Testis (tissue), 5 donors: ENCODE measurements at regions of chr13 and their contacts with region 1.

Region 1: GRCh38 chr13:21137696-21138095 is 38.7 kb downstream of the SKA3 start:
- DNase-seq: no peak
- H3K4me3 ChIP-seq: no peak overlapping the region
- H3K27ac ChIP-seq: no peak overlapping the region
- H3K4me1 ChIP-seq: peaks cover 14% of the 10 kb centered on the region
- H3K27me3 ChIP-seq: no peaks in the 10 kb centered on the region
- CTCF ChIP-seq: no peak
- POLR2A ChIP-seq: no peak

Region 2: GRCh38 chr13:20945952-20946383 is 191.7 kb before region 1 on chr13:
- intact Hi-C with region 1: loop called (anchors 10 kb)
- DNase-seq: no peak
- H3K4me3 ChIP-seq: peak overlapping the region in 1 of 2 donors; percentile 31
- H3K27ac ChIP-seq: no peak overlapping the region
- H3K4me1 ChIP-seq: no peaks in the 10 kb centered on the region
- H3K27me3 ChIP-seq: no peaks in the 10 kb centered on the region
- CTCF ChIP-seq: no peak
- POLR2A ChIP-seq: no peak

Region 3: GRCh38 chr13:21014502-21015170 is 123.1 kb before region 1 on chr13:
- intact Hi-C with region 1: no loop called
- DNase-seq: no peak
- H3K4me3 ChIP-seq: no peak overlapping the region
- H3K27ac ChIP-seq: peak overlapping the region; percentile 14 to 50
- H3K4me1 ChIP-seq: peaks cover 20% of the 10 kb centered on the region
- H3K27me3 ChIP-seq: no peaks in the 10 kb centered on the region
- CTCF ChIP-seq: no peak
- POLR2A ChIP-seq: no peak